ENCODE measurements at regions of chr16 and their contacts with region 1.

Region 1: DNA sequence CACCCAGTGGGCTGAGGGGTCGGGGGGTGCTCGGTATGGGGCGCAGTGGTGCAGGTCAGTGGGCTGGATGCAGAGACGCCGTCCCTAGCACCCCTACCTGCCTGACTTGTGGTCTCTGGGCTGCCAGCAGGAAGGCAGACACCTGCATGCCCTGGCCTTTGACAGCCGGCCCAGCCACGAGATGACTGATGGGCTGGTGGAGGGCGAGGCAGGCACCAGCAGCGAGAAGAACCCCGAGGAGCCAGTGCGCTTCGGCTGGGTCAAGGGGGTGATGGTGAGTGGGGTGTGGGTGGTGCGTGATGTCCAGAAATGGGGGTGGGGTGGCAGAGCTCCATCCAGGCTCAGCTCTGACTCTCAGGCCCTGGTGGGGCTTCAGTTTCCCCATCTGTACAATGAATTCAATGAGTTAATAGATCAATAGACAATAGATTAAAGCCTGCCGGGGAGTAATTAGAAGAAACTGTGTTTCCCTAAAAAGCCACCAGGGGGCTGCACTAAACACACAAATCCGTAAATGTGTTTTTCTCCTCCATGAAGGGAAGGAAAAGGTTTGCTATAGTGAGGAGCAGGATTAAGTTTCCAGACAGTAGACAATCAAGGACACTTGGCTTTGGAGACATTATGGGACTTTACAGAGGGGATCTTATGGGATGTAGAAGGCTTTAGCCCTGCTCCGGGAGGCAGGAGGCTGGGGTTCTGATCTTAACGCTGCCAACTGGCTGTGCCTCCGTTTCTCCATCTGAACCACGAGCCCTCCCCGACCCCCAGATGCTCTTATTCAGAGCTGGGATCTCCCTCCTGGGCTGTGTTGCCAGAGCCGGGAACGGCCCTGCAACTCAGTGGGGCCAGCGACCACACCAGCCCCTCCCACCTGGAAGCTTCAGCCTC is 2.2 kb downstream of the SLC12A3 start:
- DNase-seq: peak in 2 of 6 donors; percentile 34 to 58
- ATAC-seq: peak; percentile 52 to 80 (median 74)
- H3K4me3 ChIP-seq: peak overlapping the region in 2 of 4 donors; percentile 2 to 15
- H3K27ac ChIP-seq: no peak overlapping the region
- H3K4me1 ChIP-seq: peaks cover 0 to 8% (median 0%) of the 10 kb centered on the region in 3 donors
- H3K27me3 ChIP-seq: no peaks in the 10 kb centered on the region
- CTCF ChIP-seq: peak; percentile 53 to 80 (median 67)

Region 2: DNA sequence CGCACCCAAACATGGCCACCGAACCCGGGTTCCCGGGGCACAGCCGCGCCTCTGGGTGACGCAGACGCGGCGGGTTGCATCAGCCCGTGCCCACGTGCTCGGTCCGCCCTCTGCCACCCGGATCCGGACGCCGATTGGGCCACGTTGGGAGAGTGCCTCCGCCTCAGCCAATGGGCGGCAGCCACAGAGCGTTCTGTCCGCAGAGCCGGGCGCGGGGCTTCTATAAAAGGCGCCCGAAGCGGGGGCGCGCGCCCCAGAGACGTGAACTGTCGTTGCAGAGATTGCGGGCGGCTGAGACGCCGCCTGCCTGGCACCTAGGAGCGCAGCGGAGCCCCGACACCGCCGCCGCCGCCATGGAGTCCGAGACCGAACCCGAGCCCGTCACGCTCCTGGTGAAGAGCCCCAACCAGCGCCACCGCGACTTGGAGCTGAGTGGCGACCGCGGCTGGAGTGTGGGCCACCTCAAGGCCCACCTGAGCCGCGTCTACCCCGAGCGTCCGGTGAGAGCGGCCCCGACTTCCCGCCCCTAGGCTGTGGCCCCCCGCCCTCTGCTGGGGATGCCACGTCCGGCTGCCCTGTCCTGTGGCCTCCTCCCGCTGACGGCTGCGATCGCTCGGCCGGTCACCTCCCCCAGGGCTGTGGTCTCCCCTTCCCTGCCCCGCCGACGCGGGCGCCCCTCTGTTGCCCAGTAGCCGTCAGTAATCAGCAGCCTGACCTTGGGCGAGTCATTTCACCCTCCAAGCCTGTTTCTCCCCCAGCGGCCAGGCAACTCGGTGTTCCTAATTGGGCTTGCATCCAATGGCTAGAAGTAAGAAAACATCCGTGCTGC is 64.9 kb after region 1 on chr16 and contains the start of gene HERPUD1:
- intact Hi-C with region 1: loop called in 1 of 3 experiments (anchors 5 kb)
- DNase-seq: peak; percentile 99 to 100 (median 99)
- ATAC-seq: peak; percentile 82 to 94 (median 86)
- H3K4me3 ChIP-seq: peak within 1 kb of the TSS; percentile 99 to 100 (median 99)
- H3K27ac ChIP-seq: peak within 1 kb of the TSS; percentile 99 to 100 (median 99)
- H3K4me1 ChIP-seq: peaks cover 4 to 40% (median 8%) of the 10 kb centered on the region in 3 donors
- H3K27me3 ChIP-seq: no peaks in the 10 kb centered on the region
- CTCF ChIP-seq: peak in 1 of 4 donors; percentile 6
- total RNA-seq, gene HERPUD1: 165 to 298 (median 238) TPM

Region 3: GRCh38 chr16:56950881-56951771 is 83.9 kb after region 1 on chr16:
- intact Hi-C with region 1: loop called in 2 of 3 experiments (anchors 5 kb)
- DNase-seq: peak; percentile 65 to 87 (median 74)
- ATAC-seq: peak; percentile 55 to 84 (median 74)
- H3K4me3 ChIP-seq: no peak overlapping the region
- H3K27ac ChIP-seq: peak overlapping the region in 1 of 4 donors; percentile 12
- H3K4me1 ChIP-seq: peaks cover 0 to 4% (median 0%) of the 10 kb centered on the region in 3 donors
- H3K27me3 ChIP-seq: no peaks in the 10 kb centered on the region
- CTCF ChIP-seq: peak in 3 of 4 donors; percentile 38 to 55 (median 38)

Measured in pancreas (tissue), 10 donors.